Activated CD4-positive, alpha-beta T cell treated with anti-CD3 and anti-CD28 coated beads for 36 hours (primary cell): ENCODE measurements at regions of chr2 and their contacts with region 1.

Region 1: DNA sequence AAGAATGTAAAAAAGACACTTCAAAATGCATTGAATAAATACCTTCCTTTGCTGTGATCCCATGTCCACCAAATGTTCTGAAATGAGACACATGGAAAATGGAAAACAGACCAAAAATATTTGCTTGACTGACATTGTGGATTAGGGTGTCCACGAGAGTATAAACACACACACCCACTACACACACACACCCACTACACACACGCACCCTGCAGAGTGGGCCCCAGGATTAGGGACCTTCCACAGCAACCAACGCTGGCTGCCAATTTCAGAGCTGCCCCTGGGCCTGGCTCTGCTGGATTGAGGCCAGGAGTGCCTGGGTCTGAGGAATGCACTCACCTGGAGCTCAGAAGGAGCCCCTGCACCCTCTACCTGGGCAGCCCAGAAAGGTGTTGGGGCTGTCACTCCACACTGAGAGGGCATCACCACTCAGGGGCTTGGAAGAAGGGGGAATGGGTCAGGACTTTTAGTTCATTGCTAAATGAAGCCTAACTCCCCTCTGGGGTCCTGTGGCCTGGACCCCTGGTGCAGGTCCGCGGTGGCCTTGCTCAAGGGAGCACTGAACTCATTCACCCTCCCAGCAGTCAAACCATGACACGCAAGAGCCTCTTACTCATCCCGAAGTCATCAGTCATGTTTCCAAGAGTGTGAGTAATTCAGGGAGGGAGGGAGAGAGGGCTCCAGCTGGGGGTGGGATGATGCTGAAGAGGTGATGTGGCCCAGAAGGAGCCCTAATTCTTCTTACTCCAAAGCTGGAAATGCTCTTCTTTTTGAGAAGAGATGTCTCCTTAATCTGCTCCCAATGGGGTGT is 50.2 kb upstream of the PLB1 start:
- DNase-seq: peak; percentile 85
- ATAC-seq: peak; percentile 70
- H3K4me3 Mint-ChIP-seq: peak overlapping the region; percentile 53
- H3K27ac Mint-ChIP-seq: peak overlapping the region; percentile 97
- H3K4me1 Mint-ChIP-seq: peaks cover 81% of the 10 kb centered on the region
- H3K27me3 Mint-ChIP-seq: no peaks in the 10 kb centered on the region

Region 2: DNA sequence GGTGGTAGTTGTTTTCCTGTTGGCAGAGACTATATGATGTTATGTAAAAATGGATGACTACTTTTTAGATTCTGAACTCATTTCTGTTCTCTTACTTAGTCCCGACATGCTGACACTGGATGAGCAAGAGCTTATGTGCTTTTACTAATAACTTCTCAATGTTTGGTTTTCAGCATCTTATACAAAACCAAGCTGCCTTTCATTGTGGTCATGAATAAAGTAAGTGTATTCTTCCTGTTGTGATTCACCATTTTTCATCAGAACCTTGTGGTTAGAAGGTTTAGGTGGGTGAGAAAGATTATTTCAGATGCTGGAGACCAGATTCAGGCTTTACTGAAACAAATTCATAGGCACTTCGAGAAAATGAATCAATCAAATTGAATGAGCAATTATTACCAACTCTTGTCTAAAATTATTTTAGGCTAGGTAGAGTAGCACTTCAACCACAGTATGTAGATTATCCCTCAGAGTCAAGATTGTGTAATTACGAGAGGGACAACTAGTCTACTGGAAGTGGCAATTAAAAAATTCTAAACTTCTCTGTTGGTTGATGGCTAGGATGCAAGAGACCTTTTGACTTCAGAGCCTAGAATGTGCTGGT is 807.5 kb before region 1 on chr2:
- CTCF ChIA-PET with region 1: no interaction called
- POLR2A ChIA-PET with region 1: no interaction called
- intact Hi-C with region 1: loop called in 1 of 2 experiments (anchors 2 kb)
- DNase-seq: peak; percentile 31
- ATAC-seq: peak; percentile 88
- H3K4me3 Mint-ChIP-seq: peak overlapping the region; percentile 50
- H3K27ac Mint-ChIP-seq: peak overlapping the region; percentile 95
- H3K4me1 Mint-ChIP-seq: peaks cover 38% of the 10 kb centered on the region
- H3K27me3 Mint-ChIP-seq: no peaks in the 10 kb centered on the region

Region 3: GRCh38 chr2:27954771-27955383 is 490.8 kb before region 1 on chr2:
- CTCF ChIA-PET with region 1: no interaction called
- POLR2A ChIA-PET with region 1: no interaction called
- intact Hi-C with region 1: loop called (anchors 2 to 5 kb)
- DNase-seq: peak; percentile 71
- ATAC-seq: peak; percentile 72
- H3K4me3 Mint-ChIP-seq: peak overlapping the region; percentile 55
- H3K27ac Mint-ChIP-seq: peak overlapping the region; percentile 91
- H3K4me1 Mint-ChIP-seq: peaks cover 73% of the 10 kb centered on the region
- H3K27me3 Mint-ChIP-seq: no peaks in the 10 kb centered on the region

Region 4: GRCh38 chr2:28413142-28413898 is 32.3 kb before region 1 on chr2:
- CTCF ChIA-PET with region 1: interaction called, 3 read pairs
- POLR2A ChIA-PET with region 1: interaction called, 3 read pairs
- intact Hi-C with region 1: loop called (anchors 1 kb)
- DNase-seq: no peak
- ATAC-seq: no peak
- H3K4me3 Mint-ChIP-seq: no peak overlapping the region
- H3K27ac Mint-ChIP-seq: peak overlapping the region; percentile 47
- H3K4me1 Mint-ChIP-seq: peaks cover 42% of the 10 kb centered on the region
- H3K27me3 Mint-ChIP-seq: no peaks in the 10 kb centered on the region

Region 5: DNA sequence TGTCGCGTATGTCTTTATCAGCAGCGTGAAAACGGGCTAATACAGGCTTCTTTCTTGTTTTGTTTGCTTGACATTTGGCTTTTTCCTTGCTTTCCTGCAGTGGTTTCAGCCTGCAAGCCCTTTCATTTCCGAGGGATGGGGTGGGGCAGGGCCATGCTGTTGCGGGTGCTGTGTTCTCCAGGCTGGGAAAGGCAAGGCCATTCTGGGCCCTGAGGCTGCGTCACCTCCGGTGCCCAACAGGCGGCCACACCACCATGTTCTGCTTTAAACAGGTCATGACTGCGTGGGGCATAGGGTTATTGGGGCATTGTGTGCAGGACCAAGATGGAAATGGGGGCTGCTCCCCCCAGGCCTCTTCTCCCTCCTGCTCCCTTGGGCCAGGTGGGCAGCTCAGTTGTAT is 11.6 kb after region 1 on chr2:
- CTCF ChIA-PET with region 1: no interaction called
- POLR2A ChIA-PET with region 1: no interaction called
- intact Hi-C with region 1: no loop called
- DNase-seq: no peak
- ATAC-seq: no peak
- H3K4me3 Mint-ChIP-seq: no peak overlapping the region
- H3K27ac Mint-ChIP-seq: no peak overlapping the region
- H3K4me1 Mint-ChIP-seq: peaks cover 2% of the 10 kb centered on the region
- H3K27me3 Mint-ChIP-seq: peaks cover 13% of the 10 kb centered on the region

Region 6: DNA sequence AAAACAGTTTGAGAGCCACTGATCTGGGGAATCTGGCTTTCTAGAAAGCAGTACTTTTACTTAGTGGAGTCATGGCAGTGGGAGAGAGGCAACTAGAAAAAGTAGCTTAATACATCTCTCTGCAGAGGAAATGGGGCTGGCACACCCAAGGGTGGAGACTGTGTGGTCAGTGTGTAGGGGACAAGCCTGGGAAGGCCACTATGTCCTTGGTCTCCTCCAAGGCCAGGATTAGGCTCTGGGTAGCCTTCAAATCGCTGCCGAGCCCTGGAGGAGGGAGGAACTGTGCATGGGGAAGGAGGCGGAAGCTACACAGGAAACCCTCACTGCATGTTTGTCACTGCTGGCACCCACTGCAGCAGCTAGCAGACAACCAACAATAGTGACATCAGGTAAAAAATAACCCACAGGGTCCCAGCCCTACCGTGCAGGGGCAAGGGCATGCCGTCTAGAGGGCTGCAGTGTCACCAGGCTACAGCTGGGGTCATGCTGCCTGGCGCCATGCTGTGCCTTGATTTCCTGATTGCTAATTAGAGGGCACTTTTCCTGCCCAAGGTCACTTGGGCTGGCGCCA is 1820.5 kb after region 1 on chr2:
- CTCF ChIA-PET with region 1: no interaction called
- POLR2A ChIA-PET with region 1: no interaction called
- intact Hi-C with region 1: loop called in 1 of 2 experiments (anchors 10 kb)
- DNase-seq: peak; percentile 69
- ATAC-seq: peak; percentile 45
- H3K4me3 Mint-ChIP-seq: peak overlapping the region; percentile 75
- H3K27ac Mint-ChIP-seq: peak overlapping the region; percentile 98
- H3K4me1 Mint-ChIP-seq: peaks cover 83% of the 10 kb centered on the region
- H3K27me3 Mint-ChIP-seq: no peaks in the 10 kb centered on the region